Heart right ventricle (tissue), 16 donors: ENCODE measurements at regions of chr2 and their contacts with region 1.

Region 1: DNA sequence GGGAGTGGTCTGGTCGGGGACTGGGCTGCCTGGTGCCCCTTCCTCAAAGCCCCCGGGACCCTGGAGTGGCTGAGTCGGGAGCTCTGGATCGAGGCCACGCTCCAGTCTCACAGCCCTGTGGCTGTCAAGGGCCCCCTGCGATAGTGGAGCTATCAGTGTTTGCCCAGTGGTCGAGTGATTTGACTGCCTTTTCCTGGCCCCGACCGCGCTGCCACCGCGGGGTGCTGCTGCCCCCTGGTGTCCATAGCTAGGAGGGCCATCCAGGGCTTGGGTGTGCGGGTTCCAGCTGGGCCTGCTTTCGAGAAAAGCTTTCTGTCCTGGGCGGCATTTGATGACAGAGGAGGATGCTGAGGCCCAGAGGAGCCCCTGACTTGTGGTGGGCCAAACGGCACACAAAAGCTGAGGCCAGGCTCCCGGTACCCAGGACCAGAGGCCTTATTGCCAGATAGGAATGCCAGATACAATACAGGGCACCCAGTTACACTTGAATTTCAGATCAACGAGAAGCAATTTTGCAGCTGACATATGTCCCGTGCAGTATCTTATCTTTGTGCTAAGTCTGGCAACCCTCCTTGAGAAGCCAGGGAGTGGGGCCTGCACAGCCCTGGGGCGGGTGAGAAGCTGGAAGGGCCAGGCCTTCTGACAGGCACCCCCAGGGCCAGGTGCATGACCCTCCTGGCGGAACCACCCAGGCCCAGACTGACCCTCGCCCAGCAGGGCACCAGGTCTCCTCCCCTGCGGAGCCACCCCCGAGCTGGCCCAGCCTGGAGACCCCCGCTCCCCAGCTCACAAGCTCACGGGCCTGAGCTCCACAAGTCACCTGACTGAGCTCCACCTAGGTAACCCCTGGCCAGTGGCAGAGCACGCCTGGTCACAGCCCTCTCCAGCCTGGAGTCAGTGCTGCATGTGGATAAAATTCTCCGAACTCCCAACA is 13.0 kb downstream of the ODC1 start:
- DNase-seq: peak; percentile 62 to 78
- ATAC-seq: peak; percentile 74 to 93 (median 86)
- H3K4me3 ChIP-seq: no peak overlapping the region
- H3K27ac ChIP-seq: no peak overlapping the region
- H3K4me1 ChIP-seq: peaks cover 0 to 26% (median 10%) of the 10 kb centered on the region in 9 donors
- H3K27me3 ChIP-seq: peaks cover 0 to 8% (median 0%) of the 10 kb centered on the region in 7 donors
- CTCF ChIP-seq: peak; percentile 92 to 99 (median 97)

Region 2: DNA sequence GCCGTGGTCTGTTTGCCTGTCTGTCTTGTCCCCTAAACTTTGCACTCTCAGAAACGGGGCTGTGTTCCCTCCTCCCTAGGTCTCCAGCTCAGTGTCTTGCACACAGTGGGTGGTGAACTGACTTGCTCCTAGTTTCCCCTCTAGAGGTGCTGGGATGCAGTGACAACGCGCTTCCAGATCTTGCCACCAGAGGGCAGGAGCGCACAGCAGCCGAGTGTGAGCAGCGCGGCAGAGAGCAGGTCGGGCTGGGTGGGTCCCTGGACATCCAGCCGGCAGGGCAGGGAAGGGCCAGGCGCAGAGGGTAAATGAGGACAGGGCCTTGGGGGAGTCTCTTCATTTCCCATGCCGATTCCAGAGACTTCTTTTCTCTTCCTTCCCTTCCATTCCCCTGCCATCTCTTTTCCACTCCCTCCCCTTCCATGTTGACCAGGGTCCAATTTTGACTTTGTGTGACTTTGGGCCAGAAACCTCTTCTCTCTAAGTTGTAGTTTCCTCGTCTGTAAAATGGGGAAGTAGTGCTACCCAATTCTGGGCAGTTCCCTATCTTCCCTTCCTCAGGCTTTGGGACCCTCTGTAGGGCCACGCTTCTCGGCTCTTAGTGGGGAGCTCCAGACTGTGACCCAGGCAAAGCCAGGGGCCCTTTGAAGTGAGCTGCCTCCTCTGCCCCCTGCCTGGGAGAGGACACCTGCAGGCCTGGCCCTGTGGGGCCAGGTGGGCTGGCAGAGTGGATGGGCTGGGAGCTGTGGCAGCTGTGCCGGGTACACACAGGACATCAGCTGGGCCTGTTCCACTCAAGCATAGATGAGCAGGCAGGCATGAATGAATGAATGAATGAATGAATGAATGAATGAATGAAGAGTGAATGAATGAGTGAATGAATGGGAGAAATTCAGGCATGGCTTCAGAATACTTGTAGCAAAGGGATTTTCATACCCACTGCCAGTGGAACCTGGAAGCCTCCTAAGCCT is 635.2 kb before region 1 on chr2:
- intact Hi-C with region 1: loop called in 1 of 10 experiments (anchors 10 kb)
- DNase-seq: peak; percentile 87 to 91
- ATAC-seq: peak; percentile 78 to 93 (median 86)
- H3K4me3 ChIP-seq: peak overlapping the region in 1 of 10 donors; percentile 24
- H3K27ac ChIP-seq: peak overlapping the region in 4 of 10 donors; percentile 5 to 72 (median 36)
- H3K4me1 ChIP-seq: peaks cover 9 to 47% (median 30%) of the 10 kb centered on the region in 9 donors
- H3K27me3 ChIP-seq: no peaks in the 10 kb centered on the region
- CTCF ChIP-seq: peak; percentile 94 to 99 (median 97)

Region 3: GRCh38 chr2:9984217-9984739 is 450.9 kb before region 1 on chr2:
- intact Hi-C with region 1: loop called in 2 of 10 experiments (anchors 10 kb)
- DNase-seq: no peak
- ATAC-seq: peak; percentile 46 to 79 (median 59)
- H3K4me3 ChIP-seq: peak overlapping the region in 1 of 10 donors; percentile 11
- H3K27ac ChIP-seq: peak overlapping the region in 8 of 10 donors; percentile 10 to 58 (median 20)
- H3K4me1 ChIP-seq: peaks cover 5 to 43% (median 21%) of the 10 kb centered on the region in 9 donors
- H3K27me3 ChIP-seq: no peaks in the 10 kb centered on the region
- CTCF ChIP-seq: peak; percentile 78 to 93 (median 86)

Region 4: DNA sequence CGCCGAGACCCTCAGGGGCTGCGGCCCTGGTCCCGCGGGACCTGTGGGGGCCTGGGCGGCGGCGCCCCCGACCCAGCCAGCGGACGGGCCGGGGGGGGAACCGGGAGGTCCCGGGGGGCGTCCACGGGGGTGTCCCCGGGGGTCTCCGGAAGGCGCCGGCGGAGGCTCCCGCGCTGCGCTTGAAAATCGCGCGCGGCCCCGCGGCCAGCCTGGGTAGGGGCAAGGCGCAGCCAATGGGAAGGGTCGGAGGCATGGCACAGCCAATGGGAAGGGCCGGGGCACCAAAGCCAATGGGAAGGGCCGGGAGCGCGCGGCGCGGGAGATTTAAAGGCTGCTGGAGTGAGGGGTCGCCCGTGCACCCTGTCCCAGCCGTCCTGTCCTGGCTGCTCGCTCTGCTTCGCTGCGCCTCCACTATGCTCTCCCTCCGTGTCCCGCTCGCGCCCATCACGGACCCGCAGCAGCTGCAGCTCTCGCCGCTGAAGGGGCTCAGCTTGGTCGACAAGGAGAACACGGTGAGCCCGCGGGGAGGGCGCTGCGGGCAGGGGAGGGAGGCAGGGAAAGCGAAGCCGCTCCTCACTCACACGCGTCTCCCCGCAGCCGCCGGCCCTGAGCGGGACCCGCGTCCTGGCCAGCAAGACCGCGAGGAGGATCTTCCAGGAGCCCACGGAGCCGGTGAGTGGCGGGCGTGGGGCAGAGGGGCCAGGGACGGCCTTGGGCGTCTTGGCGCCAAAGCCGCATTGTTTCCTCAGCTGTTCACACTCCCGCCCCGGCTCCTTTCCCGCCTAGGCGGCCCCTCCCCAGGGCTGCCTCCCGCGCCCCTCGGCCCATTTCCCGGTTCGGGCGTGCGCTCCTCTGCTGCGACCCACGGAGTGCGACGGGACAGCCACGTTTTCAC is 312.5 kb before region 1 on chr2 and contains the start of gene RRM2:
- intact Hi-C with region 1: loop called (anchors 1 to 5 kb)
- DNase-seq: peak; percentile 92 to 93
- ATAC-seq: peak; percentile 89 to 94 (median 92)
- H3K4me3 ChIP-seq: peak within 1 kb of the TSS; percentile 39 to 77 (median 54)
- H3K27ac ChIP-seq: peak within 1 kb of the TSS in 1 of 10 donors; percentile 77
- H3K4me1 ChIP-seq: peaks cover 14 to 73% (median 29%) of the 10 kb centered on the region in 9 donors
- H3K27me3 ChIP-seq: peaks cover 11 to 27% (median 18%) of the 10 kb centered on the region in 7 donors
- CTCF ChIP-seq: no peak
- total RNA-seq, gene RRM2: 0.08 to 18.7 (median 1.3) TPM

Region 5: GRCh38 chr2:10659898-10660568 is 224.9 kb after region 1 on chr2:
- intact Hi-C with region 1: loop called in 6 of 10 experiments (anchors 5 to 10 kb)
- DNase-seq: peak; percentile 37 to 51
- ATAC-seq: peak; percentile 46 to 92 (median 82)
- H3K4me3 ChIP-seq: no peak overlapping the region
- H3K27ac ChIP-seq: no peak overlapping the region
- H3K4me1 ChIP-seq: peaks cover 0 to 11% (median 0%) of the 10 kb centered on the region in 9 donors
- H3K27me3 ChIP-seq: no peaks in the 10 kb centered on the region
- CTCF ChIP-seq: peak; percentile 36 to 87 (median 76)